ENCODE measurements at regions of chr4 and their contacts with region 1.

Region 1: GRCh38 chr4:103091601-103092223 is 7.9 kb downstream of the BDH2 start:
- DNase-seq: peak; percentile 62
- H3K4me3 Mint-ChIP-seq: no peak overlapping the region
- H3K27ac Mint-ChIP-seq: no peak overlapping the region
- H3K4me1 Mint-ChIP-seq: peaks cover 11% of the 10 kb centered on the region
- H3K27me3 Mint-ChIP-seq: no peaks in the 10 kb centered on the region

Region 2: DNA sequence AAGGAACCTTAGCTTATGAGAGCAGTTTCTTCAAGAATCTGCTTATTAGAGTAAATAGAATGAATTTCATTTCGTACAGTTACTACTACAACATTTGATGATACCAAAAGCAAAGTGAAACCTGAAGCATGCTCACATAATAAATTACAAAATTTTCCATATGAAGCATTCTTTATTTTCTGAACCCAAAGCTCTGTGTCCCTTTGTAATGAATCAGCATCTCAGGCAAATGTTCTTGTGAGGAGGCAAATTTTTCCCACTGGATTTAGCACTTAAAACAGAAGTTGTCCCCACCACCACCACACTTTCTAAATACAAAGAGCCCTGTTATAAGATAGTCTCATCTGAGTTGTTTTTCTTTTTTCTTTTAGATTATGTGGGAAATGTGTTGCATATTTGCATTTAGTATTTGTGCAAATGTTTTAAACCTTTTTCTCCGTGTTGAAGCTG is 661.2 kb before region 1 on chr4:
- CTCF ChIA-PET with region 1: interaction called, 6 read pairs
- intact Hi-C with region 1: loop called (anchors 1 kb)
- DNase-seq: no peak
- H3K4me3 Mint-ChIP-seq: peak overlapping the region; percentile 82
- H3K27ac Mint-ChIP-seq: peak overlapping the region; percentile 81
- H3K4me1 Mint-ChIP-seq: peaks cover 8% of the 10 kb centered on the region
- H3K27me3 Mint-ChIP-seq: peaks cover 5% of the 10 kb centered on the region

Region 3: GRCh38 chr4:102620697-102621497 is 470.8 kb before region 1 on chr4:
- CTCF ChIA-PET with region 1: interaction called, 8 read pairs
- intact Hi-C with region 1: loop called (anchors 1 kb)
- DNase-seq: peak; percentile 30
- H3K4me3 Mint-ChIP-seq: no peak overlapping the region
- H3K27ac Mint-ChIP-seq: no peak overlapping the region
- H3K4me1 Mint-ChIP-seq: peaks cover 52% of the 10 kb centered on the region
- H3K27me3 Mint-ChIP-seq: no peaks in the 10 kb centered on the region

Region 4: DNA sequence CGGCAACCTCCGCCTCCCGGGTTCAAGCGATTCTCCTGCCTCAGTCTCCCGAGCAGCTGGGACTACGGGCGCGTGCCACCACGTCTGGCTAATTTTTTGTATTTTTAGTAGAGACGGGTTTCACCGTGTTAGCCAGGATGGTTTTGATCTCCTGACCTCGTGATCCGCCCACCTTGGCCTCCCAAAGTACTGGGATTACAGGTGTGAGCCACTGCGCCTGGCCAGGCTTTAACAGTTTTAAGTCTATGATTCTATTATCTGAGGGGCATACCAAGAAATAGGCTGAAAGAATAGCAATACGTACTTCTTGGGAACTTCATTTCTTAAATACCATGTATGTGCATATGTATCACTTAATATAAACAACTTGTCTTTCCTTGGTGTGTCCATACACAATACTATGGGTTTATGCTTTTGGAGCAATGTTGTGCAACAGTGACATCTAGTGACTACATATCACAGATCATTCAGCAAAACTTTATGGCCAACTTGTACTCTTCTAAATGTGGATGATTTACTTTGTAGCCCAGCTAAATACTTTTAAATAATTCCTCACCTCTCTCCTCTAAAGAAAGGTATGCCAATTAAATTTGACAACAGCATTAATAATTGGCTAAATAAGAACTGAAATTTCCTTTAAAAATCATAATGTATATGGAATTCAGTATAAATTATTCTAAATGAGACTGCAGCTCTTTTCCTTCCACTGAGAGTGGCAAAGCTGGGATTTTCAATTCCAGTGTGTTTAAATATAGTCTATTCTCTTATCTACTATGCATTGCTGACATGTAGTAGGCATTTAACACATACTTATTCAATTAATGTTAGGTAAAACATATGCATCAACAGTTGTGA is 82.6 kb before region 1 on chr4:
- CTCF ChIA-PET with region 1: interaction called, 8 read pairs
- intact Hi-C with region 1: loop called (anchors 1 kb)
- DNase-seq: peak; percentile 22
- H3K4me3 Mint-ChIP-seq: no peak overlapping the region
- H3K27ac Mint-ChIP-seq: no peak overlapping the region
- H3K4me1 Mint-ChIP-seq: no peaks in the 10 kb centered on the region
- H3K27me3 Mint-ChIP-seq: no peaks in the 10 kb centered on the region

Region 5: GRCh38 chr4:103026868-103027267 is 64.8 kb before region 1 on chr4:
- CTCF ChIA-PET with region 1: interaction called, 11 read pairs
- intact Hi-C with region 1: no loop called
- DNase-seq: no peak
- H3K4me3 Mint-ChIP-seq: no peak overlapping the region
- H3K27ac Mint-ChIP-seq: no peak overlapping the region
- H3K4me1 Mint-ChIP-seq: peaks cover 9% of the 10 kb centered on the region
- H3K27me3 Mint-ChIP-seq: no peaks in the 10 kb centered on the region

Region 6: DNA sequence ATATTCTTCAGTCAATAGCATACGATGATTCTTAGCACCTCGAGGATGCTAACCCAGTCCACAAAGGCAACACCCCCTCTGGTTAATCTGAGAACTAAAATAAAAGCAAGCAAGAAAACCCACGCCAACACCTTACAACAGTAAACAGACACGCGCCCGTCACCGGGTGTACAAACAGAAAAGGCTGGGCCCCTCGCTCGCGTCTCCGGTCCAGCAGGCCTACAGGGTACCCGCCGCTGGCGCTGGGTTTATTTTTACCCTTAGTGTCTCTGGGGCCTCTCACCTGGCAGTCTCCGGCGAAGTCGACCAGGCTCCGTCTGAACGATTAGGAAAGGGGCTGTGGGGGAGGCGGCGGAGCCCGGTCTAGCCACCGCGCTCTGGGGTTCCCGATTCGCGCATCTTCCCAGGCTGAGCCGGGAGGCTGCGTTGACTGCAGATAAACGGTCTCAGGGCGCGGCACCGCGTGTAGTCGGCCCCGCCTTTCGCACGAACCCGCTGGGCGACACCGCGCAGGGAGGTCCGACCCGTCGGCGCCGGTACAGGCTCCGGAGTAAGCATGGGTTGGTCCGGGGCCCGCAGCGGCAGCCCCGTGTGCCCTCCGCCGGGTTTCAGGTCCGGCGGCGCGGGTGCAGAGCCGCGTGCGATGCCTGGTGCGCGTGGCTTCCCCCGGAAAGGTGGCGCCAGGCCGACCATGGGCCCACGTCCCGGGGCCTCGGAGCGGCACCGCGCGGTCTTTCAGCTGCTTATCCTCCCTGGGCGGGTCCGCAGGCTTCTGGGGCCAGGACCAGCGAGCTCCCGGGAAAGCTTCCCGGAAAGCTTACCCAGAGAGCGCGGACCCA is 15.6 kb before region 1 on chr4:
- CTCF ChIA-PET with region 1: interaction called, 46 read pairs
- intact Hi-C with region 1: no loop called
- DNase-seq: peak; percentile 62
- H3K4me3 Mint-ChIP-seq: peak overlapping the region; percentile 82
- H3K27ac Mint-ChIP-seq: peak overlapping the region; percentile 98
- H3K4me1 Mint-ChIP-seq: peaks cover 47% of the 10 kb centered on the region
- H3K27me3 Mint-ChIP-seq: no peaks in the 10 kb centered on the region